Naive thymus-derived CD4-positive, alpha-beta T cell (primary cell): ENCODE measurements at regions of chr11 and their contacts with region 1.

Region 1: DNA sequence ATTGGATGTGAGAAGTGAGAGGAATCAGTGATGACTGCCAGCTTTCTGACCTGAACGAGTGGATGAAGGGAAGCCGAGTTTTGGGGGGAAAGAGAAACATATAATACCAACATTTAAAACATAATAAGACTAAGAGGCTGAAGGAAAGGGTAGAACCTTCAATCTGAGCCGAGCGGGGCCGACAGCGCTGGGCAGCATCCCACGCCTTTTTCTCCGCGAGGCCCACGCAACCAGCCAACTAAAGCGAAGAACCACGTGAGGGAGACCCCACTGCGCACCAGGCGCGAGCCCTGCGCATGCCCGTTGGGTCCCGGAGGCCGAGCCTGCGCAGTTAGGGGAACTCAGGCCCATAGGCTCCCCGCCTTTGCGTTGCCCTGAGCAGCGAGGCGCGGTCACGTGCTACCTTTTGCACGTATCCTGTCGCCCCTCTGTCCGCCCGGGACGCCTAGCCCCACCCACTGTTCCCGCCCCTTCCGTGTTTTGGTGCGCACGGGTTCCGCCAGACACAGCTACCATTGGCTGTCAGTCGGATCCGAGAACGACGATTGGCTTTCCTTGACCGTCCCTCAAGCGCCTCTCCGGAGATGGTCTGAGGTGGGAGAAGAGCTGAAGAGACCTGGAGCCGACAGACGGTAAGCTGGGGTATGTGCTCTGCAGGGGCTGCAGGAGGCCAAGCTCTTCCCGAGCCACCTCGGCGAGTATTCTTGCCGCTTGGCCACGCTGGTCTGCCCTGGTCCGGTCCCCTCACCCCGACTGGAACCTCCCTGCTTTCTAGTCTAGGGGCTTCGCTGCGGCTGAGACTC is at the start of gene HINFP:
- DNase-seq: peak; percentile 92 to 100 (median 98)
- ATAC-seq: peak; percentile 99
- H3K4me3 ChIP-seq: peak within 1 kb of the TSS; percentile 71
- H3K4me3 Mint-ChIP-seq: peak within 1 kb of the TSS; percentile 86 to 98 (median 94)
- H3K27ac ChIP-seq: peak within 1 kb of the TSS; percentile 85
- H3K27ac Mint-ChIP-seq: peak within 1 kb of the TSS; percentile 78 to 98 (median 95)
- H3K4me1 ChIP-seq: peaks cover 17 to 23% of the 10 kb centered on the region in 2 donors
- H3K4me1 Mint-ChIP-seq: peaks cover 34 to 58% (median 50%) of the 10 kb centered on the region in 7 donors
- H3K27me3 ChIP-seq: no peaks in the 10 kb centered on the region
- H3K27me3 Mint-ChIP-seq: no peaks in the 10 kb centered on the region
- total RNA-seq, gene HINFP: 30.7 to 79.7 (median 42.7) TPM

Region 2: GRCh38 chr11:119057000-119057769 is 64.0 kb before region 1 on chr11 and contains the start of gene HYOU1:
- CTCF ChIA-PET with region 1: interaction called, 3 read pairs
- POLR2A ChIA-PET with region 1: interaction called, 4 read pairs
- intact Hi-C with region 1: loop called (anchors 1 to 2 kb)
- DNase-seq: peak; percentile 97 to 98 (median 98)
- ATAC-seq: peak; percentile 98
- H3K4me3 ChIP-seq: peak within 1 kb of the TSS; percentile 73
- H3K4me3 Mint-ChIP-seq: peak within 1 kb of the TSS; percentile 90 to 99 (median 95)
- H3K27ac ChIP-seq: peak within 1 kb of the TSS; percentile 96
- H3K27ac Mint-ChIP-seq: peak within 1 kb of the TSS; percentile 86 to 99 (median 95)
- H3K4me1 ChIP-seq: peaks cover 18 to 20% of the 10 kb centered on the region in 2 donors
- H3K4me1 Mint-ChIP-seq: peaks cover 22 to 44% (median 35%) of the 10 kb centered on the region in 7 donors
- H3K27me3 ChIP-seq: no peaks in the 10 kb centered on the region
- H3K27me3 Mint-ChIP-seq: no peaks in the 10 kb centered on the region
- total RNA-seq, gene HYOU1: 77.8 to 198 (median 110) TPM

Region 3: DNA sequence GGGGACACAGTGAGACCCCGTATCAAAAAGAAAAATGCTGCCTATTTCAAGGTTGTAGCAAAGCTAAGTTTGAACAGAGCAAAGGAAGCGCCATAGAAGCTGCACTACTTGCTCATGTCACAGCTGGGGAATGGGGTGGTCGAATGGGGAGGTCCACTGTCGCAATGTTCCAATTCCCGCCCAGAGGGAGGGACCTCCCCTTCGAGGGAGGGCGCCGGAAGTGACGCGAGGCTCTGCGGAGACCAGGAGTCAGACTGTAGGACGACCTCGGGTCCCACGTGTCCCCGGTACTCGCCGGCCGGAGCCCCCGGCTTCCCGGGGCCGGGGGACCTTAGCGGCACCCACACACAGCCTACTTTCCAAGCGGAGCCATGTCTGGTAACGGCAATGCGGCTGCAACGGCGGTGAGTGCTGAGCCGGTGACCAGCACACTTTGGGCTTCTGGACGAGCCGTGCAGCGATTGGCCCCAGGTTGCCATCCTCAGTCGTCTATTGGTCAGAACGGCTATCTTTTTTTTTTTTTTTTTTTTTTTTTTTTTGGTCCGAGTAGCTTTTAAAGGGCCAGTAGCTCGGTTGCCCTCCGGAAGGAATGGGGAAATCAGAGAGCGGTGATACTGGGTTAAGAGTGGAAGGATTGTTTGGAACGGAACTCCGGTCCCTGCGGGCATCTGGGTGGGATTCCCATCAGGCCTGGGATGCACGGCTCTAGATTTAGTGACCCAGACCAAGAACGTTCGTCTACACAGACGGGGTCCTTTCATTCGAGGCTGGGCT is 36.4 kb before region 1 on chr11 and contains the start of gene HMBS:
- CTCF ChIA-PET with region 1: no interaction called
- POLR2A ChIA-PET with region 1: interaction called, 8 read pairs
- intact Hi-C with region 1: loop called (anchors 1 kb)
- DNase-seq: peak; percentile 83 to 93 (median 87)
- ATAC-seq: peak; percentile 97
- H3K4me3 ChIP-seq: peak within 1 kb of the TSS; percentile 81
- H3K4me3 Mint-ChIP-seq: peak within 1 kb of the TSS; percentile 85 to 98 (median 94)
- H3K27ac ChIP-seq: peak within 1 kb of the TSS; percentile 81
- H3K27ac Mint-ChIP-seq: peak within 1 kb of the TSS; percentile 87 to 97 (median 93)
- H3K4me1 ChIP-seq: peaks cover 8 to 9% of the 10 kb centered on the region in 2 donors
- H3K4me1 Mint-ChIP-seq: peaks cover 7 to 39% (median 17%) of the 10 kb centered on the region in 7 donors
- H3K27me3 ChIP-seq: no peaks in the 10 kb centered on the region
- H3K27me3 Mint-ChIP-seq: no peaks in the 10 kb centered on the region
- total RNA-seq, gene HMBS: 6.7 to 25.4 (median 7.7) TPM

Region 4: GRCh38 chr11:119144825-119145486 is 23.7 kb after region 1 on chr11:
- CTCF ChIA-PET with region 1: no interaction called
- POLR2A ChIA-PET with region 1: no interaction called
- intact Hi-C with region 1: loop called in 1 of 2 experiments (anchors 2 kb)
- DNase-seq: no peak
- ATAC-seq: peak; percentile 80
- H3K4me3 ChIP-seq: no peak overlapping the region
- H3K4me3 Mint-ChIP-seq: no peak overlapping the region
- H3K27ac ChIP-seq: no peak overlapping the region
- H3K27ac Mint-ChIP-seq: peak overlapping the region in 1 of 9 donors; percentile 59
- H3K4me1 ChIP-seq: peaks cover 0 to 11% of the 10 kb centered on the region in 2 donors
- H3K4me1 Mint-ChIP-seq: peaks cover 5 to 18% (median 13%) of the 10 kb centered on the region in 7 donors
- H3K27me3 ChIP-seq: no peaks in the 10 kb centered on the region
- H3K27me3 Mint-ChIP-seq: peaks cover 31 to 51% (median 36%) of the 10 kb centered on the region in 5 donors

Region 5: DNA sequence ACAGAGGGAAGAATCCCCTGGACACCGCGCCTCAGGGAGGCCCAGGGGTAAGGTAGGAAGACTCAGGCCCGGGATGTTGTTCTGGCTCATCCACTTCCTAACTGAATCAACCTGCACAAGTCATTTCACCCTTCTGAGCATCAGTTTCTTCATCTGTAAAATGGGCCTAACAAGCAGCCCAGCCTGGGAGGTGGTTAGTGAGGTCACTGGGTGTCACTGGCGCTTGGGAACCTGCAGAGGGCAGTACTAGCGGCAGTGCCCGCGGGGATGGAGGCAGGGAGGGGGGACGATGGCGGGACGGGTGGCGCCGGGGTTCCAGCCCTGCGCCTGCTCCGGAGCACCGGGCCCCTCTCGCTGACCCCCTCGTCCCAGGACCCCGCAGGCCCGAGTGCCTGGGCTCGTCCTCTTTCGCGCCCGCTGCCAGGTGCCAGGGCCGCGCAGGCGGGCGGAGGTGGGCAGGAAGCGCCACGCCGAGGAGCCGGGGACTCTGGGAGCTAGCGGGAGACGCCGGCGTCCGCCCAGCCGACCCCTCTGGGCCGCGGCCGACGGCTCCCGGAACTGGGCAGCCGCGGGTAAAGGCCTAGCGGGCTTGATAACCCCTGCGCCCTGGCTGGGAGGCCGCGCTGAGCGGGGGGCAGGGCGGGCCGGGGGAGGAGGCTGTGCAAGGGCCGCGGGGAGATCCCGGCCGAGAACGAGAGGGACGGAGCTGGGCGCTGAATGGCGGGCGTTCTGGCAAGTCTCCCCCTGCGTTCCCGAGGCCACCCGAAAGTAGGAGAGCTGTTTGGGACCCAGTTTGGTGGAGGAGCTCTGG is 47.5 kb after region 1 on chr11 and contains the start of gene NLRX1:
- CTCF ChIA-PET with region 1: no interaction called
- POLR2A ChIA-PET with region 1: interaction called, 3 read pairs
- intact Hi-C with region 1: loop called in 1 of 2 experiments (anchors 1 kb)
- DNase-seq: peak; percentile 67 to 85 (median 82)
- ATAC-seq: peak; percentile 98
- H3K4me3 ChIP-seq: peak within 1 kb of the TSS; percentile 75
- H3K4me3 Mint-ChIP-seq: peak within 1 kb of the TSS; percentile 86 to 94 (median 90)
- H3K27ac ChIP-seq: peak within 1 kb of the TSS; percentile 73
- H3K27ac Mint-ChIP-seq: peak within 1 kb of the TSS; percentile 64 to 95 (median 87)
- H3K4me1 ChIP-seq: peaks cover 0 to 4% of the 10 kb centered on the region in 2 donors
- H3K4me1 Mint-ChIP-seq: peaks cover 4 to 25% (median 11%) of the 10 kb centered on the region in 7 donors
- H3K27me3 ChIP-seq: no peaks in the 10 kb centered on the region
- H3K27me3 Mint-ChIP-seq: no peaks in the 10 kb centered on the region
- total RNA-seq, gene NLRX1: 8.3 to 19.5 (median 9.8) TPM

Region 6: GRCh38 chr11:119196833-119197483 is 75.7 kb after region 1 on chr11:
- CTCF ChIA-PET with region 1: no interaction called
- POLR2A ChIA-PET with region 1: no interaction called
- intact Hi-C with region 1: loop called in 1 of 2 experiments (anchors 5 kb)
- DNase-seq: peak in 8 of 9 donors; percentile 51 to 84 (median 78)
- ATAC-seq: peak; percentile 98
- H3K4me3 ChIP-seq: no peak overlapping the region
- H3K4me3 Mint-ChIP-seq: no peak overlapping the region
- H3K27ac ChIP-seq: no peak overlapping the region
- H3K27ac Mint-ChIP-seq: no peak overlapping the region
- H3K4me1 ChIP-seq: no peaks in the 10 kb centered on the region
- H3K4me1 Mint-ChIP-seq: peaks cover 0 to 10% (median 5%) of the 10 kb centered on the region in 7 donors
- H3K27me3 ChIP-seq: no peaks in the 10 kb centered on the region
- H3K27me3 Mint-ChIP-seq: peaks cover 0 to 5% (median 0%) of the 10 kb centered on the region in 5 donors

Region 7: DNA sequence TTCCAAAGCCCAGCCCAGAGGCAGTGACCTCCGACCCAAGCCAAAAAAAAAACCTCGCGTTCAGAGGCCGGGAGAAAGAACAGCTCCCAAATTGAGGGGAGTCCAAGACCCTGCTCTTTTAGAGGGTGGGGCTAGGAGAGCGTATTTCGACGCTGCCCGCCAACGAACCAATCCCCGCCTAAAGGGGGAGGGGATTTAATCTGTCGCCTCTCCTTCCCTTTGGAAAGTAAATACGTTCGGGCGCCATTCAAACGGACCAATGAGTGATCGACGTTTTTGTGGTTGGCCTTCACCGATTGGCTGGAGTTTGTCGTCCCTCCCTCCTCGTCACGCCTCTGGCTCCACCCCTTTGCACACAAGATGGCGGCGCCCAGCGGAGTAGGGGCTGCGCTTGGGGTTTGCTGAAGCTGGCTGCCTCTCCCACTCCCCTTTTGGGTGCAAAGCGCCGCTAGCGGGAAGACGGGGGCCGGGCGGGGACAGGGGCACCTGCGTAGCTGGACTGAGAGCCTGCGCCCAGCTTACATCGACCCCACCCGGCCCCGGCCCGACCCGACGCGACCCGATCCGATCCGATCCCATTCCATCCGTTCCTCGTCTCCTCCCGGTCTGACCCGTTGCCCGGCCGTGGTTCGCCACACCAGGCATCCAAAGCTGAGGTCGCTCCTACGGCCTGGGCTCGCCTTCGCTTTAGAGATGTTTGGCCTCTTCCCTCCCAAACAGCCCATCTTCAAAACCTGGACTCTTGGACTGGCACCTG is 213.1 kb after region 1 on chr11 and contains the start of gene RNF26:
- CTCF ChIA-PET with region 1: no interaction called
- POLR2A ChIA-PET with region 1: no interaction called
- intact Hi-C with region 1: loop called in 1 of 2 experiments (anchors 1 kb)
- DNase-seq: peak; percentile 82 to 96 (median 94)
- ATAC-seq: peak; percentile 98
- H3K4me3 ChIP-seq: peak within 1 kb of the TSS; percentile 60
- H3K4me3 Mint-ChIP-seq: peak within 1 kb of the TSS; percentile 88 to 99 (median 98)
- H3K27ac ChIP-seq: peak within 1 kb of the TSS; percentile 89
- H3K27ac Mint-ChIP-seq: peak within 1 kb of the TSS; percentile 91 to 99 (median 97)
- H3K4me1 ChIP-seq: peaks cover 10 to 12% of the 10 kb centered on the region in 2 donors
- H3K4me1 Mint-ChIP-seq: peaks cover 22 to 59% (median 41%) of the 10 kb centered on the region in 7 donors
- H3K27me3 ChIP-seq: peaks cover 4 to 9% of the 10 kb centered on the region in 2 donors
- H3K27me3 Mint-ChIP-seq: peaks cover 9 to 30% (median 19%) of the 10 kb centered on the region in 5 donors
- total RNA-seq, gene RNF26: 16.9 to 28.3 (median 18.9) TPM